H1 (cell line): ENCODE measurements at regions of chr3 and their contacts with region 1.

Region 1: GRCh38 chr3:42780892-42781700 is 8.0 kb upstream of the CCDC13 start:
- DNase-seq: no peak
- H3K4me3 ChIP-seq: no peak overlapping the region
- H3K27ac ChIP-seq: no peak overlapping the region
- H3K4me1 ChIP-seq: peaks cover 0 to 3% (median 0%) of the 10 kb centered on the region in 4 experiments; a peak in 2 of 7 replicates
- H3K27me3 ChIP-seq: no peaks in the 10 kb centered on the region
- CTCF ChIP-seq: peak in 2 of 3 experiments; percentile 54 to 67; a peak in 2 of 4 replicates
- EP300 ChIP-seq: no peak
- POLR2A ChIP-seq: no peak
- RAD21 ChIP-seq: peak; percentile 75 to 77

Region 2: DNA sequence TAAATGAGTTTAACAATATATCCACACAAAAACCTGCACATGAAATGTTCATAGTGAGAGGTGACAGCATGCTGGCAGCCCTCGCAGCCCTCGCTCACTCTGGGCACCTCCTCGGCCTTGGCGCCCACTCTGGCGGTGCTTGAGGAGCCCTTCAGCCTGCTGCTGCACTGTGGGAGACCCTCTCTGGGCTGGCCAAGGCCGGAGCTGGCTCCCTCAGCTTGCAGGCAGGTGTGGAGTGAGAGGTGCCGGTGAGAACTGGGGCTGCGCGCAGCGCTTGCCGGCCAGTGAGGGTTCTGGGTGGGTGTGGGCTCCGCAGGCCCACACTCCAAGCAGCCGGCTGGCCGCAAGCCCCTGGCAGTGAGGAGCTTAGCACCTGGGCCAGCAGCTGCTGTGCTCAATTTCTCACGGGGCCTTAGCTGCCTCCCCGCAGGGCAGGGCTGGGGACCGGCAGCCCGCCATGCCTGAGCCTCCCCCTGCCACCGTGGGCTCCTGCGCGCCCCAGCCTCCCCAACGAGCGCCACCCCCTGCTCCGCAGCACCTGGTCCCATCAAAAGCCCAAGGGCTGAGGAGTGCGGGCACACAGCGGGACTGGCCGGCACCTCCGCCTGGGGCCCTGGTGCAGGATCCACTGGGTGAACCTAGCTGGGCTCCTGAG is 11.5 kb before region 1 on chr3:
- CTCF ChIA-PET with region 1: interaction called, 11 read pairs
- POLR2A ChIA-PET with region 1: interaction called, 3 read pairs
- DNase-seq: no peak
- H3K4me3 ChIP-seq: no peak overlapping the region
- H3K27ac ChIP-seq: no peak overlapping the region
- H3K4me1 ChIP-seq: peaks cover 0 to 7% (median 3%) of the 10 kb centered on the region in 4 experiments; a peak in 2 of 7 replicates
- H3K27me3 ChIP-seq: peaks cover 0 to 6% (median 5%) of the 10 kb centered on the region in 4 experiments; a peak in 3 of 7 replicates
- CTCF ChIP-seq: no peak
- EP300 ChIP-seq: no peak
- POLR2A ChIP-seq: no peak
- RAD21 ChIP-seq: no peak

Region 3: DNA sequence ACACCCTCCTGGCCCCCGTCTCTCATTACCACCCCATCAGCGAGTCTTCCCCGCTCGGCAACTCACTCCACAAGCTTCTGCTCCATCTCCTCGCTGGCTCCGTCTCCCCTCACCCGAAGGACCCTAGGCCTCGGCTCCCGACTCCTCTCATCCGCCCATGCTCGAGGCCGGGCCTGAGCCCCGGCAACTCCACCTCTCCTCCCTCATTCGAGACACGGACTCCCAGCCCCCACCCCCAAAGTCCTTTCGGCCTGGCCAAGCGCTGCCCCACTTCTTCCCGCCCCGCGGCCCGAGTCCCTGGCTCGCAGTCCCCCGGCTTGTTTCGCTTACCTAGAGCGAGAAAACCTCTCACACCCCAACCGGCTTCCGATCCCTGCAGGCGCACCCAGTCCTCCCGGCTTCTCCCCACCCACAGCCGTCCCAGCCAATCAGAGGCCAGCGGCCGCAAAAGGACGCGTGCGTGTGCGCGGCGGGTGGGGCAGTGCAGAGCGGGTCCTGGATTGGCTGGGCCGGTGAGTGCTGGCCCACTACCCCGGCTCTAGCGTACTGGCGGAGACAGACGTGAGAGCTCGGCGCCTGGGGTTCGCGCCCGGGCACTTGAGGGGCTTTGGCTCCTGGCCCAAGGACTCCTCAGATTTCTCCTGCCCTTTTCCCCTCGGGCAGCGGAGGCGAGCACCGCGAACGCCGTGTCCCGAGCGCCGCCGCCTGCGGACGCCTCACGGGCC is 23.2 kb after region 1 on chr3 and contains the start of gene HIGD1A:
- CTCF ChIA-PET with region 1: interaction called, 11 read pairs
- POLR2A ChIA-PET with region 1: interaction called, 15 read pairs
- DNase-seq: peak; percentile 87 to 93
- H3K4me3 ChIP-seq: peak within 1 kb of the TSS; percentile 85 to 96 (median 88)
- H3K27ac ChIP-seq: peak within 1 kb of the TSS; percentile 68
- H3K4me1 ChIP-seq: peaks cover 0 to 6% (median 4%) of the 10 kb centered on the region in 4 experiments; a peak in 4 of 7 replicates
- H3K27me3 ChIP-seq: peaks cover 0 to 9% (median 5%) of the 10 kb centered on the region in 4 experiments; a peak in 3 of 7 replicates
- CTCF ChIP-seq: no peak
- EP300 ChIP-seq: no peak; a peak in 1 of 3 replicates
- POLR2A ChIP-seq: peak; percentile 19 to 64; a peak in 2 of 3 replicates
- RAD21 ChIP-seq: no peak
- total RNA-seq, gene HIGD1A: 94.7 and 95.4 TPM in 2 replicates

Region 4: GRCh38 chr3:42819351-42819965 is 38.4 kb after region 1 on chr3:
- CTCF ChIA-PET with region 1: interaction called, 21 read pairs
- POLR2A ChIA-PET with region 1: no interaction called
- DNase-seq: peak in 1 of 2 experiments; percentile 55
- H3K4me3 ChIP-seq: no peak overlapping the region
- H3K27ac ChIP-seq: no peak overlapping the region
- H3K4me1 ChIP-seq: peaks cover 0 to 4% (median 2%) of the 10 kb centered on the region in 4 experiments; a peak in 2 of 7 replicates
- H3K27me3 ChIP-seq: no peaks in the 10 kb centered on the region; a peak in 1 of 7 replicates
- CTCF ChIP-seq: peak in 2 of 3 experiments; percentile 18; a peak in 2 of 4 replicates
- EP300 ChIP-seq: no peak
- POLR2A ChIP-seq: no peak
- RAD21 ChIP-seq: 0 out of 4 replicates have a peak, but pooled peaks of 1 of the 2 experiments have one; percentile 3

Region 5: DNA sequence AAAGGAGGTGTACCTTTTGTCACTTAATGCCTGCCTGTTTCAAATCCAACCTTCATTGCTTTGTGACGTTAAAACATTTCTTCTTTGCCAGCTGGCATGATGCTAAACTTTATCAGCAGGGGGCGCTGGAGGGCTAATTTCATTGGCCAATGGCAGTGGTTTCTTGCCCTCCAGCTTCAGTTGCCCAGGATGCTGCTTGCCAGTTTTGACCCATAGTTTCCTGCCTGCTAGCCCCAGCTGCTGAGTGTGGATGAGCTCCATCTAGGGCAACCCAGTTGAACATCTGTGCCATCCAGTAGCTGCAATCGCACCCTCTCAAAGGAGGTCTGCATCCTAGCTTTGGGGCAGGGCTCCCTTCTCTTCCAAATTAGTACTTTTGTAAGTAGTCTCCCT is 50.2 kb after region 1 on chr3:
- CTCF ChIA-PET with region 1: interaction called, 28 read pairs
- POLR2A ChIA-PET with region 1: no interaction called
- DNase-seq: peak; percentile 78 to 95
- H3K4me3 ChIP-seq: no peak overlapping the region
- H3K27ac ChIP-seq: no peak overlapping the region
- H3K4me1 ChIP-seq: peaks cover 0 to 3% (median 2%) of the 10 kb centered on the region in 4 experiments; a peak in 3 of 7 replicates
- H3K27me3 ChIP-seq: no peaks in the 10 kb centered on the region
- CTCF ChIP-seq: peak; percentile 57 to 87 (median 86)
- EP300 ChIP-seq: no peak
- POLR2A ChIP-seq: no peak
- RAD21 ChIP-seq: peak; percentile 76 to 81

Region 6: DNA sequence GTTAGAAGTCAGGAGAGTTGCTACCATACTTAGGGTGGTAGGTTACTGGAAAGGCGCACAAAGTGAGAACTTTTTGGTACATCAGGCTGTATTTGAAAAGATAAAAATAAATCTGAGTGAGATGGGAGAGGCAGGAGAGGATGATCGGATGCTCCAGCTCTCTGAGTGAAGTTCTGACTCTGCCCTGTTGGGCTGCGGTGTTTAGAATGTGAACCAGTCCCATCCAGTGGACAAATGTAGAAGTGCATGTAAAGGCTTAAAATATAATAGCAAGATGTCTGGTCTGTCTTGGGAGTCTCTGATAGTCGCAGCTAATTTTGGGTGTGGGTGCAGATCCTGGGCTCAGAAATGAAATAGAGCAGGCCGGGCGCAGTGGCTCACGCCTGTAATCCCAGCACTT is 58.5 kb after region 1 on chr3:
- CTCF ChIA-PET with region 1: interaction called, 27 read pairs
- POLR2A ChIA-PET with region 1: no interaction called
- DNase-seq: no peak
- H3K4me3 ChIP-seq: no peak overlapping the region
- H3K27ac ChIP-seq: no peak overlapping the region
- H3K4me1 ChIP-seq: peaks cover 0 to 8% (median 4%) of the 10 kb centered on the region in 4 experiments; a peak in 6 of 7 replicates
- H3K27me3 ChIP-seq: no peaks in the 10 kb centered on the region
- CTCF ChIP-seq: peak in 2 of 3 experiments; percentile 71 to 96; a peak in 3 of 4 replicates
- EP300 ChIP-seq: no peak
- POLR2A ChIP-seq: no peak
- RAD21 ChIP-seq: peak; percentile 60 to 71

Region 7: GRCh38 chr3:43055806-43056770 is 275.0 kb after region 1 on chr3:
- CTCF ChIA-PET with region 1: no interaction called
- POLR2A ChIA-PET with region 1: no interaction called
- DNase-seq: no peak
- H3K4me3 ChIP-seq: no peak overlapping the region
- H3K27ac ChIP-seq: no peak overlapping the region
- H3K4me1 ChIP-seq: no peaks in the 10 kb centered on the region; a peak in 2 of 7 replicates
- H3K27me3 ChIP-seq: no peaks in the 10 kb centered on the region; a peak in 1 of 7 replicates
- CTCF ChIP-seq: no peak
- EP300 ChIP-seq: no peak
- POLR2A ChIP-seq: no peak
- RAD21 ChIP-seq: no peak